ENCODE measurements at regions of chr7 and their contacts with region 1.

Region 1: DNA sequence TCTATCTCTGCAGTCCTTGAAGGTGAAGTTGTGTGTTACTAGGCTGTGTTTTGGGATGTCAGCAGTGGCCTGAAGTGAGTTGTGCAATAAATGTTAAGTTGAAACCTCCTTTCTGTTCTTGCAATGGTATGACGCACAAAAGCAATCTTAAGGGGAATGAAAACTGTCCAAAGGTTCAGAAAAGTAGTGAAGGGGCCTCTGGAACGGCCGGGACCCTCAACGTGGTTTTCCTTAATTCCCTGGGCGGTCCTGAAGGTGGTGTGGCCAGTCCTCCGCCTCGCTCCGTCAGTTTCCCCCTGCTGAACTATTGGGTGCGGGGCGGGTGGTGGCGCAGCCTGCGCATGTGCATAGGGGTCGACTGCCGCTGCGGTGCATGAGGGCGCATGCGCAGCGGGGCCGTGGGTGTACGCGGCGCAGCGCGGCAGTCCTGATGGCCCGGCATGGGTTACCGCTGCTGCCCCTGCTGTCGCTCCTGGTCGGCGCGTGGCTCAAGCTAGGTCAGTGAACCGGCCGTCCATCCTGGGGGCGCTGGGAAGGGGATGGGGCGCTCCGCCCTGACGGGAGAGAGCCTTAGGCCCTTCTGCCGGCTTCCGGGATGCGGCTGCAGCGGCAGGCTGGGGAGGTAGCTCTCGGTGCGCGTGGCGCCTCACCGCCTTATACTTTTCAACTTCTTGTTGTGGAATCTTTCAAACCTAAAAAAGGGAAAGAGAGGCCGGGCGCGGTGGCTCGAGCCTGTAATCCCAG is at the start of gene SUMF2:
- DNase-seq: peak; percentile 81 to 96 (median 88)
- H3K4me3 ChIP-seq: peak within 1 kb of the TSS; percentile 64 to 99 (median 91)
- H3K27ac ChIP-seq: peak within 1 kb of the TSS; percentile 73 to 97 (median 91)
- H3K27me3 ChIP-seq: no peaks in the 10 kb centered on the region
- CTCF ChIP-seq: peak in 52 of 56 donors; percentile 21 to 68 (median 46)
- total RNA-seq, gene SUMF2: 41.7 to 111 (median 75.6) TPM

Region 2: GRCh38 chr7:56051339-56052191 is 12.5 kb before region 1 on chr7 and contains the starts of genes CCT6A and PSPH:
- intact Hi-C with region 1: loop called (anchors 1 to 2 kb)
- DNase-seq: peak; percentile 96 to 100 (median 98)
- H3K4me3 ChIP-seq: peak within 1 kb of the TSS; percentile 63 to 100 (median 91)
- H3K27ac ChIP-seq: peak within 1 kb of the TSS; percentile 19 to 98 (median 92)
- H3K27me3 ChIP-seq: no peaks in the 10 kb centered on the region
- CTCF ChIP-seq: peak in 35 of 56 donors; percentile 6 to 58 (median 22)
- total RNA-seq, gene CCT6A: 38.3 to 105 (median 76.0) TPM
- total RNA-seq, gene PSPH: 11.1 to 44.3 (median 20.0) TPM

Region 3: GRCh38 chr7:56083150-56083785 is 19.2 kb after region 1 on chr7:
- intact Hi-C with region 1: no loop called
- DNase-seq: peak; percentile 54 to 80 (median 70)
- H3K4me3 ChIP-seq: no peak overlapping the region
- H3K27ac ChIP-seq: peak overlapping the region in 51 of 59 donors; percentile 2 to 91 (median 67)
- H3K27me3 ChIP-seq: no peaks in the 10 kb centered on the region
- CTCF ChIP-seq: no peak

Region 4: GRCh38 chr7:56106108-56107073 is 42.3 kb after region 1 on chr7 and contains the start of gene CHCHD2:
- intact Hi-C with region 1: loop called (anchors 5 kb)
- DNase-seq: peak; percentile 89 to 98 (median 98)
- H3K4me3 ChIP-seq: peak within 1 kb of the TSS; percentile 52 to 99 (median 88)
- H3K27ac ChIP-seq: peak within 1 kb of the TSS; percentile 8 to 92 (median 83)
- H3K27me3 ChIP-seq: peaks cover 0 to 18% (median 0%) of the 10 kb centered on the region in 45 donors
- CTCF ChIP-seq: peak in 22 of 56 donors; percentile 4 to 45 (median 22)
- total RNA-seq, gene CHCHD2: 175 to 432 (median 281) TPM

Region 5: DNA sequence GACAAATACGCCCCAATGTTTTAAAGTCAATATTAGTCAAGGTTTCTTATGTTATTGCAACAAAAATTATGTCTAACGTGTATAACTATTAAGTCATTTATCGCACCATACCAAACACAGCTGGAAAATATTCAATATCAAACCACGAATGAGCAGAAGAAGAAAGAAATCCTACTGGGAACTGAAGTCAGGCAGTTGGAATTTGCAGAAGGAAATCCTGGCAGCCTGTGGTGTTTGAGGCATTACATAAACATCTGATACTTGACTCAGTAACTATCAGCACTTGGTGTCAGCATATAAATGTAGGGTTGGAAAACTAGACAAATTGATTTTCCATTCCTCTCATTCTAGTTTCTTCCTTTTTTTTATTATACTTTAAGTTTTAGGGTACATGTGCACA is 135.6 kb after region 1 on chr7:
- intact Hi-C with region 1: no loop called
- DNase-seq: no peak
- H3K4me3 ChIP-seq: no peak overlapping the region
- H3K27ac ChIP-seq: no peak overlapping the region
- H3K27me3 ChIP-seq: peaks cover 0 to 4% (median 0%) of the 10 kb centered on the region in 45 donors
- CTCF ChIP-seq: no peak

Measured in dorsolateral prefrontal cortex (tissue), 120 donors.